ENCODE measurements at regions of chr19 and their contacts with region 1.

Region 1: GRCh38 chr19:13597640-13598039 is 91.4 kb upstream of the CACNA1A start:
- DNase-seq: no peak
- ATAC-seq: peak; percentile 81

Region 2: DNA sequence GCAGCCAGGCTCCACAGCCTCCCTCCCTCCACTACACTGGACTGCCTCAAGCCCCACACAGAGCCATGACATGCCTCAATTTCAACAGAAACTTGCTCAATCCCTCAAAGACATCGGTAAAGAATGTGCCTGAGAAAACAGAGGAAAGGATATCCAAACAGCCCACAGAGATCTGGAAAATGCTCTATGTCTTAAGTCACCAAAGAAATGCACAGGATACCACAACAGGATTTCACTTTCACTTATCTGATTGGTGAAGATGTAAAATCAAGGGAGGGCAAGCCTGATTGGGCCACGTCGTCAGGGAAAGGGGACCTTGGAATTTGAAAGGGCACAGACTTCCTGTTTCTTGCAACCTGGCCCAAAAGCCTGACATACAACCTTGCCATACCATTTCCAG is 105.5 kb before region 1 on chr19:
- intact Hi-C with region 1: no loop called
- DNase-seq: no peak
- ATAC-seq: no peak

Region 3: DNA sequence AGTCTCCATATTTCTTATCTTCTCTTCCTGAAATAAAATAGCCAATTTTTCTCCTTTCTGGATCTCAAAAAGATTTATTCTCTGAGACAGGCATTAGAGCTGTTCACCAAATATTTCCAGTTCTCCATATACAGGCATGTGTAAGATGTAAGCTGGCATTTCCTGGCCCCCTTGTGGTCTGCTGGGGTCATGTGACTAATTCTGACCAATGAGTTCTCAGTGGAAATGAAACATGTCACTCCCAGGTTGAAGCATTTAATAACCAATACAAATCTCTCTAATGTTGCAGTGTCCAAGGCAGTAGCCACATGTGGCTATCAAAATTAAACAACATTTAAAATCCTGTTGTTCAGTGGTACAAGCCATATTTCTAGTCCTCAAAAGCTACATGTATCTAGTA is 76.6 kb before region 1 on chr19:
- intact Hi-C with region 1: no loop called
- DNase-seq: no peak
- ATAC-seq: no peak

Region 4: GRCh38 chr19:13718733-13719132 is 121.1 kb after region 1 on chr19:
- intact Hi-C with region 1: loop called (anchors 2 kb)
- DNase-seq: peak; percentile 51
- ATAC-seq: peak; percentile 89

Region 5: DNA sequence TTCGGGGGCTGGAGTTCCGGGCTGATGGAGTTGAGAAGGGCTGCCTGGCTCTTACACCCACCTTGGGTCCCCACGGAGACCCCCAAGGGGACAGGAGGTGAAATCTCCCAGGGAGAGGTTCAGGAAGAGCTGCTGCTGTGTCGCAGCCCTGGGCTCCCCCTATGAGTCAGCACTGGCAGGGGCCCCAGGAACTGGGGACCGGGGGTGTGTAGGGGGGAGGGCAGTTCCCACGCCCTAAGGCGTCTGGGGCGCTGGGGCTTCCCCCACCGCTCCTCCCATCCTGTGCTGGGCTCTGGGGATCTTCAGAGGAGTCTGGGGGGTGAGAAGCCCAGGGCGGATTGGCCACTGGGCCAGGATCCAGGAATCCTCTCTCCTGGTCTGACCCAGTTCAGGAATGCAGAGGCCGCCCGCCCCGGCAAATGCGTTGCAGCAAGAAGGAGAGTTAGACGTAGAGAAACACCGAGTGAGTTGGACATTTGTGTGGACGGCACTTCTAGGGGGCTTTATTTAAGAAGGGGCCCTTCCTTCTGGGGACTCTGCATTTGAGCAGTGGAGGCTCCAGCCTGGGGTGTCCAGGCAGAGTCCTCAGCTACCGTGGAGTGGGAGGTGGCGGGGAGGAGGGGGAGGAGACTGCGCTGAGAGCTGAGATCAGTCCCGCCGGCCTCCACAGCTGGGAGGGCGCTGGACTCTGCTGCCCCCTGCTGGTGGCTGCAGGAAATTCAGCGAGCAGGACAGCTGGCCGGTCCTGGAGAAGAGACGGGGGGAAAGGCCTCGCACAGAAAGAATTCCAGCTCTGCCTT is 264.3 kb after region 1 on chr19:
- intact Hi-C with region 1: loop called (anchors 10 kb)
- DNase-seq: peak; percentile 96
- ATAC-seq: peak; percentile 93

Measured in Right ventricle myocardium superior (tissue), 1 donor.